Activated CD8-positive, alpha-beta T cell treated with anti-CD3 and anti-CD28 coated beads for 36 hours (primary cell): ENCODE measurements at regions of chr16 and their contacts with region 1.

Region 1: GRCh38 chr16:21698169-21699032 is 34.6 kb downstream of the OTOA start:
- DNase-seq: no peak
- ATAC-seq: no peak
- H3K4me3 Mint-ChIP-seq: no peak overlapping the region
- H3K27ac Mint-ChIP-seq: no peak overlapping the region
- H3K4me1 Mint-ChIP-seq: no peaks in the 10 kb centered on the region
- H3K27me3 Mint-ChIP-seq: no peaks in the 10 kb centered on the region
- CTCF ChIP-seq: no peak

Region 2: GRCh38 chr16:21684199-21684598 is 14.2 kb before region 1 on chr16:
- CTCF ChIA-PET with region 1: interaction called, 26 read pairs
- POLR2A ChIA-PET with region 1: no interaction called
- intact Hi-C with region 1: no loop called
- DNase-seq: peak; percentile 56
- ATAC-seq: no peak
- H3K4me3 Mint-ChIP-seq: no peak overlapping the region
- H3K27ac Mint-ChIP-seq: no peak overlapping the region
- H3K4me1 Mint-ChIP-seq: no peaks in the 10 kb centered on the region
- H3K27me3 Mint-ChIP-seq: peaks cover under 1% of the 10 kb centered on the region
- CTCF ChIP-seq: peak; percentile 84